ENCODE measurements at regions of chr17 and their contacts with region 1.

Region 1: GRCh38 chr17:4658478-4659305 is 17.2 kb upstream of the ALOX15 start:
- DNase-seq: no peak
- H3K4me3 ChIP-seq: no peak overlapping the region
- H3K27ac ChIP-seq: no peak overlapping the region
- H3K27me3 ChIP-seq: peaks cover 0 to 8% (median 0%) of the 10 kb centered on the region in 45 donors
- CTCF ChIP-seq: no peak

Region 2: GRCh38 chr17:5902181-5903140 is 1243.8 kb after region 1 on chr17:
- intact Hi-C with region 1: loop called in 1 of 2 experiments (anchors 10 kb)
- DNase-seq: peak in 1 of 10 donors; percentile 70
- H3K4me3 ChIP-seq: no peak overlapping the region
- H3K27ac ChIP-seq: no peak overlapping the region
- H3K27me3 ChIP-seq: peaks cover 0 to 7% (median 0%) of the 10 kb centered on the region in 45 donors
- CTCF ChIP-seq: no peak

Measured in dorsolateral prefrontal cortex (tissue), 120 donors.